ENCODE measurements at regions of chr2 and their contacts with region 1.

Region 1: DNA sequence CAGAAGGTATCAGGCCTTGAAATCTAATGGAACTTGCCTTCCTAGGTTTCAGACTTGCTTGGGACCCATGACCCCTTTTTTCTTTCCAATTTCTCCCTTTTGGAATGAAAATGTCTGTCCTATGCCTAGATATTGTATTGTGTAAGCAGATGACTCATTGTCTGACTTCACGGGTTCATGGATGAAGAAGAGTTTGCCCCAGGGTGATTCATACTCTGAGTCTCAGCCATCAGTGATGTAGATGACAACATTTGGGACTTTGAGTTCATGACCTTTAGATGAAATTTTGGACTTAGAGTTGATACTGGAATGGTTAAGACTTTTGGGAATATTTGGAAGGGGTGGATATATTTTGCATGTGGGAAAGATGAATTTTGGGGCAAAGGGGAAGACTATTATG is 11.2 kb upstream of the SCYGR5 start:
- DNase-seq: peak; percentile 18
- CTCF ChIP-seq: no peak

Region 2: GRCh38 chr2:227214622-227215041 is 440.8 kb before region 1 on chr2:
- CTCF ChIA-PET with region 1: no interaction called
- POLR2A ChIA-PET with region 1: no interaction called
- DNase-seq: no peak
- CTCF ChIP-seq: no peak

Region 3: DNA sequence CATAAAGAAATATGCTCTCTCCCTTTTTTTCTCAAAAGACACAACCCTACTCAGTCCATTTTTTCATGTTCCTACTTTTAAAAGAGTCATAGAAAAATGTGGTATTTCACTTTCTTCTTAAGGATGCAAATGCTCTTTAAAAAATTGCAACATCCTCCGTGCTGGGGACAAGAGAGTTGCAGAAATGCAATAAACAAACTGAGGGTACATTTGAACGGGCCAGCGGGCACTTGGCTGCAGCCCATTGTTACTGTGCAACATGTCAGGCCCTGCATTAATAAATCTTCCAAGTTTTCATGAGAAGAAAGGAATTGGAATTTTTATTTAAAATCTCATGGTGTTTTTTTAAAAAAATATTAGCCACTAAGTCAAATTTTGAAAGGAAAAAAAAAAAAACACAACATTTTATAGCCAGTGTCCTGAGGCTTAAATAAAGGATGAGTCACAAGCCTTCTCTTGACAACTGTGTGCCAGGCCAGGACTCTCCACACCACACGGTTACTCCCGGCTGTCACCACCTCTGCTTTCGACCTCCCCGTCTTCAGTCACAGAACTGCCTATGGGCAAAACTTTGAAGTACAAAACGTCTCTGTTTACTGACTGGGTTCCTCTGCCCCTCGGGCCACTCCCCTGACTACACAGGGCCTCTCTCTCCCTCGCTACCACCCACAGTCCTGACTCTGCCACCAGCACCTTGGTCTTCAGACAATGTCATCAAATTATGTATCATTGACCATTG is 387.9 kb before region 1 on chr2:
- CTCF ChIA-PET with region 1: no interaction called
- POLR2A ChIA-PET with region 1: no interaction called
- DNase-seq: no peak
- CTCF ChIP-seq: no peak

Region 4: DNA sequence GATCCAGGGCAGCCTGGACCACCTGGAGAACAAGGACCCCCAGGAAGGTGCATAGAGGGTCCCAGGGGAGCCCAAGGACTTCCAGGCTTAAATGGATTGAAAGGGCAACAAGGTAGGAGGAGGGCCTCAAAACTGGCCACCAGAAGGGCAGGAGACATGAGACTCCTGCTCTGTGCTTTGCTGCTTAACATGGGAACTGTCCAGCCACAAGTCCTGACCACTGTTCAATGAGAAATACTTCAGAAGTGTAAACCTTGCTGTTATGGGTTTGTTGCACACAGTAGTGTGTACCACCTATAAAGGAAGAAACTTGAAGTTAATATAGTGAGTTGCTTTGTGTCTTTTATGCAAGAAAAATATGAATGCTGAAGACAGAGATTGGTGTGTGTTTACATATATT is 374.6 kb before region 1 on chr2:
- CTCF ChIA-PET with region 1: no interaction called
- POLR2A ChIA-PET with region 1: no interaction called
- DNase-seq: no peak
- CTCF ChIP-seq: no peak

Region 5: GRCh38 chr2:227627769-227628168 is 27.7 kb before region 1 on chr2:
- CTCF ChIA-PET with region 1: interaction called, 13 read pairs
- POLR2A ChIA-PET with region 1: no interaction called
- DNase-seq: peak; percentile 29
- CTCF ChIP-seq: no peak

Region 6: DNA sequence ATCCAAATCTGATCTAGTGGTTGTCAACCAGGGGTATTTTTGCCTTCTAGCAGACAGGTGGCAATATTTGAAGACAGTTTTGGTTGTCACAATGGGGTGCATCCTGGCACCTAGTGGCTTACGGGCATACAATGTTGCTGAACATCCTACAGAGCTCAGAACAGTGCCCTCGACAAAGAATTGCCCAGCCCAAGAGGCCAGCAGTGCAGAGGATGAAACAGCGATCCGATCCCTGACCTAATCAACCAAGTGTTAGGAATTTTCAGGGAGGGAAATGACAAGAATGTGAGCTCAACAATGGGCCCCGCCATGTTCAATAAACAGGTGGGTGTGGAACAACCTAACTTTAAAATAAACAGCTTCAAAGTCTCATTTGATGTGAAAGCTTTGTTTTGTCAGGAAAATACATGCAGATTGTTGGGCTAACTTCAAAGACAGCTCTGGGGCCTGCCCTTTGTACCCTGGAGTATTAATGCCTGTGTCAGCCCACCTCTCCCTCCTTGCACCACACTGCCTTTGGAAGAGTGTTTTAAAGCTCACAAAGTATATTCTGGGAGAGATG is 11.4 kb before region 1 on chr2:
- CTCF ChIA-PET with region 1: interaction called, 40 read pairs
- POLR2A ChIA-PET with region 1: no interaction called
- DNase-seq: no peak
- CTCF ChIP-seq: peak; percentile 5

Region 7: GRCh38 chr2:227684276-227684675 is 28.8 kb after region 1 on chr2:
- CTCF ChIA-PET with region 1: interaction called, 10 read pairs
- POLR2A ChIA-PET with region 1: no interaction called
- DNase-seq: no peak
- CTCF ChIP-seq: no peak

Region 8: GRCh38 chr2:227862227-227862740 is 206.8 kb after region 1 on chr2:
- CTCF ChIA-PET with region 1: interaction called, 63 read pairs
- POLR2A ChIA-PET with region 1: no interaction called
- DNase-seq: peak; percentile 57
- CTCF ChIP-seq: peak; percentile 85

Region 9: DNA sequence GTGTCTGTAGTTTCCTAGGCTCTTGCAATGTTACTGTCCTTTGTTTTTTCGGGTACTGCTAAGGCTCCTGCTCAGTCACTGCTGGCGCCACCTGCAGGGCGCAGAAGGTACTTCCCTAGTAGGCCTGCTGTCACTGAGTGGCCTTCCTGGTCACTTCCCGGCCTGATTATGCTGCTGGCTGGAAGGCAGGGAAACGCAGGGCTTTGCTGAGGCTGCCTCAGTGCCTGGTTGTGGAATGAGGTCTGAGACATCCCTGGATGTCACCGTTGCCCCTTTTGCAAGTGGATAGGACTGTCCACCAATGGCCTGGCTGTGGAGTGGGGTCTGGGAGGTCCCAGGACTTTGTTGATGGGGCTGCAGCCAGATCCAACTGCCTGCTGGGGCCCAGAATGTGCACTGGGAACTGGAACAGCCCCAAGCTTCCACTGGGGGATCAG is 229.1 kb after region 1 on chr2:
- CTCF ChIA-PET with region 1: interaction called, 22 read pairs
- POLR2A ChIA-PET with region 1: no interaction called
- DNase-seq: peak; percentile 76
- CTCF ChIP-seq: peak; percentile 83